Panc1 (cell line): ENCODE measurements at regions of chr7 and their contacts with region 1.

Region 1: DNA sequence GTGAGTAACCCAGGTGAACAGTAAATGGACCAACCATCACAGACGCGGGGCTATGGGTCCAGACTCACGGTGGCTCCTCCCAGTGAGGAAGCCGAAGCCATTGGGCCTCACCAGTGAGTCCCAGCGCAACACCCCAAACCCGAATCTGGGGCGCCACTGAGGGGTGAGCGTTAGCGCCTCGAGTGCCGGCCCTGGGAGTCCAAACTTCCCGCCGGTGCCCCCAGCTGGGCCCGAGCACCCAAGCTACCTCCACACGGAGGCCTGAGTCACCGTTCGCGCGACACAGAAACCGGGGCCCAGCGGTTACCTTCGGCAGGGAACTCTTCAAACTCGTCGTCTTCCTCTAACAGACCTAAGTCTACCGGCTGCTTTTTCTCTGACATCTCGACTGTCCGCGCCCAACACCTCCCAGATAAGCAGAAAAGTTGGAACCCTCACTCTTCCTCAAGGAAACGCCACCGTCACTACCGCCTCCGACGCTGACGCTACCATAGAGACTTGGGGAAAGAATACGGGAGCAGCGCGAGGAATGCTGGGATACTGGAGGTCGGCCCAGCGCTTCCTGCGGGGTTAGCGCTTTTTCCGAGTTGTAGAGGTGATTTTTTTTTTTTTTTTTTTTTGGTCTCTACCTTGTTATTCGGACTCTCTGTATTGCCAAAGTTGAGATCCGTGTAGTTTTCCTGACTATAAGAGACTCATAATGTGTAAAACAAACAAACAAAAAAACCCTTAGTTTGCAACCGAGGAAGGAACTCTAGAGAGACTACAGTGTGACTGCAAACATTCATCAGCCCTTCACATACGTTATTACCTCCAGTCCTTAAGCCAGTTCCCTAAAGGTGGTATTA is at the start of gene SEM1:
- DNase-seq: peak; percentile 80
- ATAC-seq: peak; percentile 100
- H3K4me3 ChIP-seq: peak within 1 kb of the TSS; percentile 89 to 96
- H3K27ac ChIP-seq: peak within 1 kb of the TSS; percentile 96
- H3K4me1 ChIP-seq: peaks cover 7% of the 10 kb centered on the region
- H3K27me3 ChIP-seq: no peaks in the 10 kb centered on the region
- CTCF ChIP-seq: no peak
- total RNA-seq, gene SEM1: 67.8 TPM

Region 2: DNA sequence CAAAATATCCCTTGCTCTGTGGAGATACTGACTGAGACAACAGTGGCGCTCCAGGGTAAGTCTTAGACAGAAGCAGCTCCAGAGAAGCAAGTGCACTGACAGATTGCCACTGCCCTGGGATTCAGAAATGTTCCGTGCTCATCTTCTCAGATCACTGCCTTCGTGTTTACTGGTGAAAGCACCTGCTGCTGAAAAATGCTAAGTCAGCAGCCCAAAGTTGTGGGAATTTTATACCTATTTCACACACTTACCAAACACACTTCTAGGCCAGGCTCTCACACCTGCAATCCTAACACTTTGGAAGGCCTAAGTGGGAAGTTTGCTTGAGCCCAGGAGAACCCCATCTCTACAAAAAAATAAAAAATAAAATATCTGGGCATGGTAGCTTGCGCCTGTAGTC is 232.5 kb after region 1 on chr7:
- CTCF ChIA-PET with region 1: no interaction called
- POLR2A ChIA-PET with region 1: no interaction called
- in situ Hi-C with region 1: no loop called
- intact Hi-C with region 1: no loop called
- DNase-seq: no peak
- ATAC-seq: no peak
- H3K4me3 ChIP-seq: no peak overlapping the region
- H3K27ac ChIP-seq: no peak overlapping the region
- H3K4me1 ChIP-seq: no peaks in the 10 kb centered on the region
- H3K27me3 ChIP-seq: no peaks in the 10 kb centered on the region
- CTCF ChIP-seq: no peak

Region 3: DNA sequence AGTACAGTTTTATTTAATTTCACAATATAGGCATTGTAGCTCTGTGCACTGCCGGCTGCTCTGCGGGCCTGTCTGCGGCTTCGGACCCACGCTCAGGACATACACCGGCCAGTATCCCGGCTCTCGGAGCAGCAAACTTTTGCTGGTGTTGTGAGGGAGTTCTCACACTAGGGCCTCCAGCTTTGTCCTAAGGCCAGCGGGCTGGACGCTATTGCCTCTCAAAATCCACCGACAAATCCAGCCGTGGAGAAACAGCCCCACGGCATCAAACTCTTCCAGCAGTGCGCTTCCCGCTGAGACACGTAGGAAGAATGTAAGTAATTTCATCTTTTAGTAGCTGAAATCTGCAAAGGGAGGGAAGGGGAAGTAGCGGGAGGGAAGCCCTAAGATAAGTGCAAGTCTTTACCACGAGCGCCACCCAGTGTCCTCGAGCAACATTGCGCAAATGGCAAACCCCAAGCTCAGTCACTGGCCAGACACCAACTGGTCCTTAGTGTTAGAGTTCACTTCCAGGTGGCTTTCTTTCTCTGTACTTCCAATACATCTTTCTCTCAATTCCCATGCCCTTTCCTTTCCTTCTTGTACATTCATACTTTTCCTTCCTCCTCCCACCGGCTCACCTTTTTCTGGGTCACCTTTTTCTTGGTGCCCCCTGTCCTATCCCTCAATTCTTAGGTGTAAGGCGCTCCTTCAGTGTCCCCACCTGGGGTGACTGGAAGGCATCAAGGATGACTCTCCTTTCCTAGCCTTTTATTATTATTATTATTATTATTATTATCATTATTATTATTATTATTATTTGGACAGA is 318.0 kb after region 1 on chr7:
- CTCF ChIA-PET with region 1: no interaction called
- POLR2A ChIA-PET with region 1: no interaction called
- in situ Hi-C with region 1: no loop called
- intact Hi-C with region 1: loop called (anchors 10 kb)
- DNase-seq: peak; percentile 67
- ATAC-seq: peak; percentile 93
- H3K4me3 ChIP-seq: peak overlapping the region; percentile 13 to 43; a peak in 3 of 4 replicates
- H3K27ac ChIP-seq: no peak overlapping the region
- H3K4me1 ChIP-seq: no peaks in the 10 kb centered on the region
- H3K27me3 ChIP-seq: no peaks in the 10 kb centered on the region; the same call in none of the 2 replicates
- CTCF ChIP-seq: peak; percentile 88